ENCODE measurements at regions of chr5 and their contacts with region 1.

Region 1: DNA sequence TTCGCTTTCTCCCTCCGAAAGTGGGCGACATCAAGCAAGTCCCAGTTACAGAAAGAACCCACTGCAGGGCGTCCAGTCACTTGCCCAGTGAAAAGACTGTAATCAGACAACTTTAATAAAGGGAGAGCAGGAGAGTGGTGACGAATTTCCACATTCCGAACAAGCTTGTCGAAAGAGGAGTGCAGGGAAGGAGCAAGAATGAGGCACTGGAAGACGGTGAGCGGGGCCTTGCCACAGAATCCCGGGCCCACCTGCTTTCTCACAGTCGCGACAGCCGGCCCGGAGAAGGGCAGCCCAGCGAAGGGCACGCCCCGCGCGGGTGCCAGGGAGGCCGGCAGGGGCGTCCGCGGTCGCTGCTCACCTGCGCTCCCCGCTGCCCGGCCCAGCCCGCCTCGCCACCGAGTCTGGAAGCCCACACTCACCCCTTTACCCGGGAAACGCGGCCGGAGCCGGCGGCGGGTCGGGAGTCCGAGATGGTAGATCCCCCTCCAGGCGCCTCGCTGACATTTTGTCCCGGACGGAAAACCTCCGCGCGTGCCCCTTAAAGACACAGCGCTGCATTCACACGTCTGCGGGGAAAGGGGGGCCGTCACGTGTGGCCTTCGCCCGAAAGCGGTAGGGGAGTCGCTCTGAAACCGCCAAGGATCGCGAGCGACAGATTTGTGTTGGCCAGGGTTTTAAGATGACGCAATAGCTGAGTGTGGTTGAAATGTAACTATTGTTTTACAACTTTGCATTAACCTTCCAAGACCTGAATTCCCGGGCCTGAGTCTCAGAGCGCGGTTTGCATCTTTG is at the start of gene ZBED3:
- DNase-seq: peak; percentile 71

Region 2: DNA sequence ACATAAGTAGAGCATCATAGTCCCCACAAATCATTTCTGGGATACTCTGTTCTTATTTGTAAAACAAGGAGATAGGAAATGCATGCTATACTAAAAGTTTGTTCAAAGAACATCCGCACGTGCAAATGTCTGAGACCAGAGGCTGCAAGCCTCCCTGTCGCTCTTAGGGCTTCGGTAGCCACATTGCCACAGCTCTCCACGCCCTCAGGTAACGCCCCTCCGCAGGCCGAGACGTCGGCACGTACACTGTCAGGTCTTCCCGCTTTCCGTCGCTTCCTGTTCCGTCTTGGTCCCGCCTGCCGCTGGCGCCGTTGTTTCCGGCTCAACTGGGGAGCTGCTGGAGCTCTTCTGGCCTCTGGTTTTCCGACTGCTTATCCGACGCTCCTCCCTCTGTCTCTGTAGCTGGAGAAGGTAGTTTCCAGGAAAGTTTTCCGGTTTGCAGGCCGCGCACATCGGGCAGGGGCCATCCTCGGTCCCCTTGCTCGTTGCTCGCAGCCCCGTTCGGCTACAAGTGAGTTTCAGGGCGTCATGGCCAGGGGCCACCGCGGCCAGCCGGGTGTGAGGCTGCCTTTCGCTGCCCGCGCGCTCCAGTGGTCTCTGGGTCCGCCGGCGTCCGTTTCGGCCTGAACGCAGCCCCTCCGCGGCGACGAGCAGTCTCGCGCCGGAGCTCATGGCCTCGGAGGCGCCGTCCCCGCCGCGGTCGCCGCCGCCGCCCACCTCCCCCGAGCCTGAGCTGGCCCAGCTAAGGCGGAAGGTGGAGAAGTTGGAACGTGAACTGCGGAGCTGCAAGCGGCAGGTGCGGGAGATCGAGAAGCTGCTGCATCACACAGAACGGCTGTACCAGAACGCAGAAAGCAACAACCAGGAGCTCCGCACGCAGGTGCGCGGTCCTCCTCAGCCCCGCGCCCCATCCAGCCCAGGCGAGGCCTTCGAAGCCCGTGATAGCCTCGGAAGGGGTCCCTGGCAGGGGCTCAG is 56.5 kb before region 1 on chr5 and contains the start of gene AGGF1:
- CTCF ChIA-PET with region 1: no interaction called
- POLR2A ChIA-PET with region 1: interaction called, 11 read pairs
- DNase-seq: peak; percentile 87

Region 3: DNA sequence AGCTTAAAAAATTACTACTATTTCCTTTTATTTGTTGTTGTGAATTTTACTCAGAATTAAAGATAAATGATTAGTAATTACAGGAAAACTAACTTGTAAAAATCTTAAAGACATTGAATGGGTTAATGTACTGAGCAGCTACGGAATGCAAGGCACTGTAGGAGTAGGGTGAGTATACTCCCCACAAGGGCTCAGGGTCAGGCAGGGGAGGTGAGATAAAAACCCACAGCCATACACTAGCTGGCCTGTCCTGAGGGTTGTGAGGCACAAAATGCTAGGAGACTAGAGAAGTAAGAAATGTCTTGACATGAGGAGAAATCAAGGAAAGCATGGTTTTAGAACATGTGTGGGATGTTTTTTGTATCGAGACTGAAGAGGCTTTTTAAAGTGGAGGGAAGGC is 13.2 kb before region 1 on chr5:
- CTCF ChIA-PET with region 1: no interaction called
- POLR2A ChIA-PET with region 1: interaction called, 10 read pairs
- DNase-seq: no peak

Region 4: GRCh38 chr5:77101298-77101697 is 14.4 kb after region 1 on chr5:
- CTCF ChIA-PET with region 1: no interaction called
- POLR2A ChIA-PET with region 1: interaction called, 13 read pairs
- DNase-seq: no peak

Region 5: DNA sequence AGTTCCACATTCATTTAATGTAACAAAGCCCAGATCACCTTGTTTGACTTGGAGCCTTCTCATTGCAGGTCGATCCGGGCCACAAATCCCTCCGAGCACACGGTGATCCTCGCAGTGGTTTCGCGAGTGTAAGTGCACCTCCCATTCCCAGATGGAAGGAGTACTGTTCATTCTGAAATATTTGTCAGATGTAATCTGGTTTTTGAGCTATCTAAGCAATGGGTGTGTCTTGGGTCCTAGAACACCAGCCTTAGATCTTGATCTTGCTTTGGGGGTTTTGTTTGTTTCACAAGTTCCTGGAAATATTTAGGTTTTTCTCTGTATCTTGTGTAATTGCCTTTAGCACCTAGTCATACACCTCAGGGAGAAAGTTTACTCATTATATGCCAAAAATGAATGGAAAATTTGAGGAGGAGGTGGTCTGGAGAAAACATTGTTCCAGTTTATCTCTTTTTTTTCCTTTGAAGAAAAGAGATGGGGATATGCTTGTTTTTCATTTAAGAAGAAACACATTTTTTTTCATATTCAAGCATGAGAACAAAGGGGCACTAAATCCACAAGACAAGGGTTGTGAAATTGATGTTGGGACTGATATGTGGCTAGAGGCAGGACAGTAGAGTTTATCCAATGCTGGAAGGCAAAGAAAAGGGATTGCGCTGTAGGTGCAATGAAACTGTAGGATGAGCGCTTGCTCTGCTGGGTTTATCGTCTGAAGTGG is 242.2 kb after region 1 on chr5:
- CTCF ChIA-PET with region 1: no interaction called
- POLR2A ChIA-PET with region 1: no interaction called
- DNase-seq: no peak

Region 6: GRCh38 chr5:77491783-77492652 is 405.1 kb after region 1 on chr5 and contains the start of gene WDR41:
- CTCF ChIA-PET with region 1: no interaction called
- POLR2A ChIA-PET with region 1: interaction called, 12 read pairs
- DNase-seq: peak; percentile 90